ENCODE measurements at regions of chr12 and their contacts with region 1.

Region 1: GRCh38 chr12:43392116-43392515 is 159.9 kb downstream of the ADAMTS20 start:
- DNase-seq: no peak
- ATAC-seq: no peak
- H3K4me3 ChIP-seq: no peak overlapping the region
- H3K27ac ChIP-seq: no peak overlapping the region
- H3K4me1 ChIP-seq: no peaks in the 10 kb centered on the region
- H3K27me3 ChIP-seq: no peaks in the 10 kb centered on the region
- CTCF ChIP-seq: no peak
- POLR2A ChIP-seq: no peak

Region 2: DNA sequence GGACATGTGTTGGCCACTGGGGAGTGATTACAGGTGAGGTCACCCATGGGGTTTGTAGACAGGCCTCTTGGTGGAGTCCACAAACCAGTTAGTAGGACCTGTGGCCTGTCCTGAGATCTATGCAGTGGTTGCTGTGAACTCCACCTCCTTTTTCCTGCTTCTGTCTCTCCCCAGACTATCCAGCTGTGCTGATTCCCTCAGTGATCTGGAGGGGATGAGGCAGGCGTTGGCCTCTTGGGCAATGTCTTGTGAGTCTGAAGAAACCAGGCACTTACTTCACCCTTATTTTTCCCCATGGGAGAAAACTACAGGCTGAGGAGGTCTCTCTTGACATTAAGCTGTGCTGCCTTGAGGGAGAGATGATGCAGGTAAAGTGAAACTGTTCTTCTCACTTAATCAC is 545.3 kb before region 1 on chr12:
- intact Hi-C with region 1: loop called in 1 of 10 experiments (anchors 5 kb)
- DNase-seq: no peak
- ATAC-seq: no peak
- H3K4me3 ChIP-seq: no peak overlapping the region
- H3K27ac ChIP-seq: no peak overlapping the region
- H3K4me1 ChIP-seq: no peaks in the 10 kb centered on the region
- H3K27me3 ChIP-seq: no peaks in the 10 kb centered on the region
- CTCF ChIP-seq: no peak
- POLR2A ChIP-seq: no peak

Region 3: GRCh38 chr12:43332977-43333640 is 59.0 kb before region 1 on chr12:
- intact Hi-C with region 1: no loop called
- DNase-seq: no peak
- ATAC-seq: no peak
- H3K4me3 ChIP-seq: no peak overlapping the region
- H3K27ac ChIP-seq: no peak overlapping the region
- H3K4me1 ChIP-seq: peaks cover 0 to 6% (median 0%) of the 10 kb centered on the region in 12 donors
- H3K27me3 ChIP-seq: no peaks in the 10 kb centered on the region
- CTCF ChIP-seq: no peak
- POLR2A ChIP-seq: no peak